CD4-positive, alpha-beta T cell (primary cell): ENCODE measurements at regions of chr1 and their contacts with region 1.

Region 1: GRCh38 chr1:245036102-245036501 is 118.7 kb upstream of the KIF26B start:
- DNase-seq: no peak
- ATAC-seq: no peak
- H3K4me3 ChIP-seq: no peak overlapping the region
- H3K4me3 Mint-ChIP-seq: no peak overlapping the region
- H3K27ac ChIP-seq: no peak overlapping the region
- H3K27ac Mint-ChIP-seq: no peak overlapping the region
- H3K4me1 ChIP-seq: no peaks in the 10 kb centered on the region
- H3K4me1 Mint-ChIP-seq: no peaks in the 10 kb centered on the region
- H3K27me3 ChIP-seq: no peaks in the 10 kb centered on the region
- H3K27me3 Mint-ChIP-seq: no peaks in the 10 kb centered on the region
- CTCF ChIP-seq: no peak

Region 2: DNA sequence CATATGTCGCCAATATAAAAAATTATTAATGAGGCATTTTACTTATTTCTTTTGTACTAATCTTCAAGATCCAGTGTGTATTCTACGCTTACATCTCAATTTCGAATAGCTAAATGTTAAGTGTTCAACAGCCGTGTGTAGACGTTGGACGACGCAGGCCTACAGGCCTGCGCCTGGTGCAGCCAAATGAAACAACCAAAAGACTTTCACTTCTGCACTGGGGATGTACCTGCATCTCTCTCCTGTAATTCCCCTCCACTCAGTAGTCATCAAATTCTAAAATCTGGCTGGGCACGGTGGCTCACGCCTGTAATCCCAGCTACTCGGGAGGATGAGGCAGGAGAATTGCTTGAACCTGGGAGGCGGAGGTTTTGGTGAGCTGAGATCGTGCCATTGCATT is 95.0 kb before region 1 on chr1:
- CTCF ChIA-PET with region 1: no interaction called
- POLR2A ChIA-PET with region 1: no interaction called
- intact Hi-C with region 1: no loop called
- DNase-seq: no peak
- ATAC-seq: no peak
- H3K4me3 ChIP-seq: no peak overlapping the region
- H3K4me3 Mint-ChIP-seq: no peak overlapping the region
- H3K27ac ChIP-seq: no peak overlapping the region
- H3K27ac Mint-ChIP-seq: no peak overlapping the region
- H3K4me1 ChIP-seq: no peaks in the 10 kb centered on the region
- H3K4me1 Mint-ChIP-seq: no peaks in the 10 kb centered on the region
- H3K27me3 ChIP-seq: no peaks in the 10 kb centered on the region
- H3K27me3 Mint-ChIP-seq: no peaks in the 10 kb centered on the region
- CTCF ChIP-seq: no peak

Region 3: DNA sequence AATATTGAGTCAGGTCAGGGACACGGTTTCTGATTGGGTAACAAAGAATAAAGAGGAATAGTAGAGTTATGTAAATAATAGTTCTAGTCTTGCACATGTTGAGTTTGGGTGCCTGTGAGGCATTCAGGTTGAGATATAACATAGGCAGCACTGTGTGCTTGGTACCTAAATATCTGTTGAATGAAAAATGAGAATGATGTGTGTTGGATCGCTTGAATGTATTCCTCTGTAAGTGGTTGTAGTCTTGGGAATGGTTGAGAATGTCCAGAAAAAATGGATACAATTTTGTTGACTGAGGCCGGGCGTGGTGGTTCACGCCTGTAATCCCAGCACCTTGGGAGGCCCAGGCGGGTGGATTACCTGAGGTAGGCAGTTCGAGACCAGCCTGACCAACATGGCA is 55.5 kb before region 1 on chr1:
- CTCF ChIA-PET with region 1: no interaction called
- POLR2A ChIA-PET with region 1: no interaction called
- intact Hi-C with region 1: loop called in 1 of 2 experiments (anchors 5 kb)
- DNase-seq: no peak
- ATAC-seq: no peak
- H3K4me3 ChIP-seq: no peak overlapping the region
- H3K4me3 Mint-ChIP-seq: no peak overlapping the region
- H3K27ac ChIP-seq: no peak overlapping the region
- H3K27ac Mint-ChIP-seq: no peak overlapping the region
- H3K4me1 ChIP-seq: no peaks in the 10 kb centered on the region
- H3K4me1 Mint-ChIP-seq: no peaks in the 10 kb centered on the region
- H3K27me3 ChIP-seq: no peaks in the 10 kb centered on the region
- H3K27me3 Mint-ChIP-seq: no peaks in the 10 kb centered on the region
- CTCF ChIP-seq: no peak

Region 4: DNA sequence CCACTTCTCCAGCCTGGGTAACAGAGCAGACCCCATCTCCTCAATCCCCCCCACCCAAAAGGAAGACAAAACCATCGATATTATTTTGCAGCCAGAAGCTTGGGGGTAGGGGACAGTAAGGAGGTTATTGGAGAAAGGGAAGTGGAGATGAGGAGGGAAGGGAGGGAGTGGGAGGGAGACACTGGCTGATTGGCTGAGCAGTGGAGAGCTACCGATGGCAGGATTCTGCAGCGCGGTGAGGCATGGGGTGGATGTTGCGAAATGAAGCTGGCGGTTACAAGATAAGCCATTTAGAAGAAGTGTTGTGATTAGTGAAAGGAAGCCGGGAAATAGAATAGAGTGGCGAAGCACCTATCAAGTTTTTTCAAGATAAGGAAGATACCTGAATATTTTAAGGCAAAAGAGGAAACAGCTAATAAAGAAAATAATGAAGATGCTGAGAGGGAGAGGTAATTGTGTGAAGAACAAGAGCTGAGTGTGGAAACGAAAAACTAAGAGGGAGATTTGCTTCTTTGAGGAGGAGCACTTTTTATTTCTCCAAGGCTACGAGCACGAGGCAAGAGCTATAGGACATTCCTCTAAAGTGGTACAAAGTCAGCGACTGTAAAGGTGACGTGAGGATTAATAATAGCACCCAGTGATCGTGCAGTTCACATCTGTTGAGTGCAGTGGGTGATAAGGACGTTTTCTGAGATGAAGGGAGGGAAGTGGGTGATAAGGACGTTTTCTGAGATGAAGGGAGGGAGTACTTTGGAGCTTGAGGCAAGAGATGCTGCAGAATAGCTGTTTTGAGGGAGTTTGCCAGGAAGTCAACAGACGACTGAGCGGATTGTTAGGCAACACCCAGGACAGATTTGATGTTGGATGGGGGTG is 15.5 kb after region 1 on chr1:
- CTCF ChIA-PET with region 1: no interaction called
- POLR2A ChIA-PET with region 1: no interaction called
- intact Hi-C with region 1: no loop called
- DNase-seq: peak in 5 of 14 experiments; percentile 8 to 50 (median 25)
- ATAC-seq: no peak
- H3K4me3 ChIP-seq: no peak overlapping the region
- H3K4me3 Mint-ChIP-seq: peak overlapping the region; percentile 31
- H3K27ac ChIP-seq: no peak overlapping the region
- H3K27ac Mint-ChIP-seq: no peak overlapping the region
- H3K4me1 ChIP-seq: peaks cover 8% of the 10 kb centered on the region
- H3K4me1 Mint-ChIP-seq: peaks cover 11% of the 10 kb centered on the region
- H3K27me3 ChIP-seq: no peaks in the 10 kb centered on the region
- H3K27me3 Mint-ChIP-seq: no peaks in the 10 kb centered on the region
- CTCF ChIP-seq: no peak

Region 5: DNA sequence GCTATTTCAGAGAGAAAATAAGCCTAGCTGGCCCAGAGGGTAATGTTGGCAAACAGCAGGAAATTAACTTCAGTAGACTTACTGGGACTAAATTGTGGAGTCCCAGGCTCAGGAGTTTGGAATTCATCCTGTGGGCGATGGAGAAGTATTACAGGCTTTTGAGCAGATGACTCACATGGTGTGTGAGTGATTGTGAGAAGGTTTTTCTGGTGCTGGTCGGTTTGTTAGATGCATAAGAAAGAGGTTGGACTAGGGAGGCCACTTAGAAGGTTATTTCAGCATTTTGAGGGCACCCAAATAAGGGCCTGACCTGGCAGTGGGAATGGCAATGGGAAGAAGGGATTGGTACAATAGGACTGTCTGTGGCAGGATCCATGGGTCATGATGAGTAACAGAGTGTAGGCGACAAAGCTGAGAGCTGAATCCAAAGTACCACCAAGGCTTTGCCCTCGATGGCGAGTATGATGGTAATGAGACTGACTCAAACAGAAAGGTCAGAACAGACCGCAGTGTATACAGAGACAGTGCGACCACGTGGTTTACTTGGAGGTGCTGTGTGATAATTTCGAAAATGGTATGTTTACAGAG is 49.5 kb after region 1 on chr1:
- CTCF ChIA-PET with region 1: no interaction called
- POLR2A ChIA-PET with region 1: no interaction called
- intact Hi-C with region 1: no loop called
- DNase-seq: no peak
- ATAC-seq: no peak
- H3K4me3 ChIP-seq: no peak overlapping the region
- H3K4me3 Mint-ChIP-seq: no peak overlapping the region
- H3K27ac ChIP-seq: no peak overlapping the region
- H3K27ac Mint-ChIP-seq: no peak overlapping the region
- H3K4me1 ChIP-seq: no peaks in the 10 kb centered on the region
- H3K4me1 Mint-ChIP-seq: no peaks in the 10 kb centered on the region
- H3K27me3 ChIP-seq: no peaks in the 10 kb centered on the region
- H3K27me3 Mint-ChIP-seq: no peaks in the 10 kb centered on the region
- CTCF ChIP-seq: no peak